Naive thymus-derived CD4-positive, alpha-beta T cell (primary cell): ENCODE measurements at regions of chr12 and their contacts with region 1.

Region 1: GRCh38 chr12:132489602-132490239 is at the start of gene FBRSL1:
- DNase-seq: peak; percentile 83 to 93 (median 91)
- ATAC-seq: peak; percentile 88
- H3K4me3 ChIP-seq: peak within 1 kb of the TSS; percentile 83
- H3K4me3 Mint-ChIP-seq: peak within 1 kb of the TSS; percentile 88 to 95 (median 92)
- H3K27ac ChIP-seq: peak within 1 kb of the TSS; percentile 96
- H3K27ac Mint-ChIP-seq: peak within 1 kb of the TSS; percentile 89 to 97 (median 94)
- H3K4me1 ChIP-seq: peaks cover 46 to 52% of the 10 kb centered on the region in 2 donors
- H3K4me1 Mint-ChIP-seq: peaks cover 51 to 76% (median 63%) of the 10 kb centered on the region in 7 donors
- H3K27me3 ChIP-seq: no peaks in the 10 kb centered on the region
- H3K27me3 Mint-ChIP-seq: no peaks in the 10 kb centered on the region
- total RNA-seq, gene FBRSL1: 56.3 to 105 (median 93.0) TPM

Region 2: GRCh38 chr12:132144115-132144812 is 345.5 kb before region 1 on chr12 and contains the starts of genes DDX51 and NOC4L:
- CTCF ChIA-PET with region 1: no interaction called
- POLR2A ChIA-PET with region 1: no interaction called
- intact Hi-C with region 1: loop called in 1 of 2 experiments (anchors 2 kb)
- DNase-seq: peak; percentile 93 to 99 (median 96)
- ATAC-seq: peak; percentile 98
- H3K4me3 ChIP-seq: peak within 1 kb of the TSS; percentile 80
- H3K4me3 Mint-ChIP-seq: peak within 1 kb of the TSS; percentile 85 to 97 (median 90)
- H3K27ac ChIP-seq: peak within 1 kb of the TSS; percentile 92
- H3K27ac Mint-ChIP-seq: peak within 1 kb of the TSS; percentile 83 to 99 (median 96)
- H3K4me1 ChIP-seq: peaks cover 21 to 23% of the 10 kb centered on the region in 2 donors
- H3K4me1 Mint-ChIP-seq: peaks cover 21 to 38% (median 29%) of the 10 kb centered on the region in 7 donors
- H3K27me3 ChIP-seq: no peaks in the 10 kb centered on the region
- H3K27me3 Mint-ChIP-seq: peaks cover 0 to 2% (median 0%) of the 10 kb centered on the region in 5 donors
- total RNA-seq, gene DDX51: 33.2 to 54.8 (median 50.6) TPM
- total RNA-seq, gene NOC4L: 19.3 to 27.1 (median 21.1) TPM

Region 3: GRCh38 chr12:132414634-132415326 is 74.9 kb before region 1 on chr12:
- CTCF ChIA-PET with region 1: no interaction called
- POLR2A ChIA-PET with region 1: interaction called, 6 read pairs
- intact Hi-C with region 1: loop called in 1 of 2 experiments (anchors 5 kb)
- DNase-seq: peak; percentile 54 to 82 (median 68)
- ATAC-seq: peak; percentile 92
- H3K4me3 ChIP-seq: no peak overlapping the region
- H3K4me3 Mint-ChIP-seq: peak overlapping the region in 4 of 10 donors; percentile 25 to 43 (median 35)
- H3K27ac ChIP-seq: no peak overlapping the region
- H3K27ac Mint-ChIP-seq: no peak overlapping the region
- H3K4me1 ChIP-seq: peaks cover 5 to 15% of the 10 kb centered on the region in 2 donors
- H3K4me1 Mint-ChIP-seq: peaks cover 0 to 5% (median 3%) of the 10 kb centered on the region in 7 donors
- H3K27me3 ChIP-seq: no peaks in the 10 kb centered on the region
- H3K27me3 Mint-ChIP-seq: peaks cover 0 to 9% (median 0%) of the 10 kb centered on the region in 5 donors

Region 4: GRCh38 chr12:132437252-132437932 is 52.3 kb before region 1 on chr12:
- CTCF ChIA-PET with region 1: no interaction called
- POLR2A ChIA-PET with region 1: interaction called, 7 read pairs
- intact Hi-C with region 1: loop called in 1 of 2 experiments (anchors 1 kb)
- DNase-seq: no peak
- ATAC-seq: peak; percentile 24
- H3K4me3 ChIP-seq: peak overlapping the region; percentile 30
- H3K4me3 Mint-ChIP-seq: peak overlapping the region; percentile 25 to 84 (median 70)
- H3K27ac ChIP-seq: peak overlapping the region; percentile 50
- H3K27ac Mint-ChIP-seq: peak overlapping the region in 6 of 9 donors; percentile 38 to 72 (median 50)
- H3K4me1 ChIP-seq: peaks cover 12 to 48% of the 10 kb centered on the region in 2 donors
- H3K4me1 Mint-ChIP-seq: peaks cover 17 to 70% (median 51%) of the 10 kb centered on the region in 7 donors
- H3K27me3 ChIP-seq: no peaks in the 10 kb centered on the region
- H3K27me3 Mint-ChIP-seq: peaks cover 0 to 4% (median 0%) of the 10 kb centered on the region in 5 donors

Region 5: DNA sequence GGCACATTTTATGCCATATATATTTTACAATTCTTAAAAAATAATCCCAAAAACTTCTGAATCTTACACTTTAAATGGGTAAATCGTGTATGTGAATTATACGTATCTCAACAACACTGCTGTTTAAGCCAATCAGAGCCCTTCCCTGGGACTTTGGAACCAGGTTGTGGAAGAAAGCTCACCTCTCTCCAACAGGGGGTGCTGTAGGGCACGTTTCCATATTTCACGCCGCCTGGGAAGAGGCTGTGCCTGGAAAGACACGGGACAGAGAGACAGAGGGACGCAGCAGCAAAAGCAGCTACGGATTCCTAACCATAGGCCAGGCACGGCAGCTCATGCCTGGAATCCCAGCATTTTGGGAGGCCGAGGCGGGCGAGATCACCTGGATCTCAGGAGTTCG is 29.1 kb before region 1 on chr12:
- CTCF ChIA-PET with region 1: no interaction called
- POLR2A ChIA-PET with region 1: interaction called, 12 read pairs
- intact Hi-C with region 1: no loop called
- DNase-seq: no peak
- ATAC-seq: no peak
- H3K4me3 ChIP-seq: no peak overlapping the region
- H3K4me3 Mint-ChIP-seq: no peak overlapping the region
- H3K27ac ChIP-seq: no peak overlapping the region
- H3K27ac Mint-ChIP-seq: no peak overlapping the region
- H3K4me1 ChIP-seq: no peaks in the 10 kb centered on the region
- H3K4me1 Mint-ChIP-seq: peaks cover 0 to 21% (median 7%) of the 10 kb centered on the region in 7 donors
- H3K27me3 ChIP-seq: no peaks in the 10 kb centered on the region
- H3K27me3 Mint-ChIP-seq: no peaks in the 10 kb centered on the region

Region 6: GRCh38 chr12:132506328-132507160 is 16.8 kb after region 1 on chr12:
- CTCF ChIA-PET with region 1: no interaction called
- POLR2A ChIA-PET with region 1: interaction called, 7 read pairs
- intact Hi-C with region 1: loop called (anchors 1 to 2 kb)
- DNase-seq: peak; percentile 41 to 74 (median 65)
- ATAC-seq: peak; percentile 70
- H3K4me3 ChIP-seq: peak overlapping the region; percentile 35
- H3K4me3 Mint-ChIP-seq: peak overlapping the region; percentile 25 to 77 (median 70)
- H3K27ac ChIP-seq: peak overlapping the region; percentile 73
- H3K27ac Mint-ChIP-seq: peak overlapping the region; percentile 62 to 90 (median 86)
- H3K4me1 ChIP-seq: peaks cover 10 to 34% of the 10 kb centered on the region in 2 donors
- H3K4me1 Mint-ChIP-seq: peaks cover 30 to 61% (median 41%) of the 10 kb centered on the region in 7 donors
- H3K27me3 ChIP-seq: no peaks in the 10 kb centered on the region
- H3K27me3 Mint-ChIP-seq: no peaks in the 10 kb centered on the region